Posterior cingulate gyrus (tissue), 11 donors: ENCODE measurements at regions of chr3 and their contacts with region 1.

Region 1: GRCh38 chr3:14203521-14204079 is 25.0 kb downstream of the LSM3 start:
- DNase-seq: peak in 7 of 10 donors; percentile 33 to 94 (median 74)

Region 2: DNA sequence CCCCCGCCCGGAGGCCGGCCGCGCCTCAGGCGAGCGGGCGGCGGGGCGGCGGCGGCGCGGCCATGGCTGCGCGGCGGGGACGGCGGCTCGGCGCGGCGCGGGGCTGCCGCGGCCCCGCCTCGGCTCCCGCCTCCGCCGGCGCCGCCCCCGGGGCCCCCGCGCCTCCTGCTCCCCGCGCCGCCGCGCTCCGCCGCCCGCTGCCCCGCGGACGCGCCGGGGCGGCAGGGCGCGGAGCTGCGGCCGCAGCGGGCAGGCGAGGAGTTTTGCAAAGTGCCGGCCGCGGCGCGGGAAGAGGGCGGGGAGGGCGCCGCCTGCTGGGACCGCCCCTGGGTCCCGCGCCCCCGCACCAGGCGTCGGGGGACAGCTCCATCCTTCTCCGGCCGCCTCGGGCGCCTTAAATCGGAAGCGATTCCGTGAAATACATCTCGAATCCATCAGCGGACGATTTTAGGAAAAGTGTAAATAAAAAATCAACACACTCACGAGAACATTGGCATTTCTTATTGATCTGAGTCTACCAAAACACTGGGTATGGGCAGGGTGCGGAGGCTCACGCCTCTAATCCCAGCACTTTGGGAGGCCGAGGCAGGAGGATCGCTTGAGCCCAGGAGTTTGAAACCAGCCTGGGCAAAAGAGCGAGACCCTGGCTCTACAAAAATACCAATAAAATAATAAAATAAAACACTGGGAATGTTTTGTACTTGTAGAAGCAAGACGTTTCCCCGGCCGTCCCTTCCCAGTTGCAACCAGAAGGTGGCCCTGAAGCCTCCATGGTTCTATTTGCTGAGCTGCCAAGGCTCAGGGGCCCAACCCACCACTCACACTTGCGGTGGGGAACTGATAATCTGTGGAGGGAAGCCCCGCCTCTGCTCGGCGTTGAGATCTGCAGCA is 920.4 kb before region 1 on chr3:
- intact Hi-C with region 1: no loop called
- DNase-seq: peak in 6 of 10 donors; percentile 9 to 90 (median 71)

Region 3: DNA sequence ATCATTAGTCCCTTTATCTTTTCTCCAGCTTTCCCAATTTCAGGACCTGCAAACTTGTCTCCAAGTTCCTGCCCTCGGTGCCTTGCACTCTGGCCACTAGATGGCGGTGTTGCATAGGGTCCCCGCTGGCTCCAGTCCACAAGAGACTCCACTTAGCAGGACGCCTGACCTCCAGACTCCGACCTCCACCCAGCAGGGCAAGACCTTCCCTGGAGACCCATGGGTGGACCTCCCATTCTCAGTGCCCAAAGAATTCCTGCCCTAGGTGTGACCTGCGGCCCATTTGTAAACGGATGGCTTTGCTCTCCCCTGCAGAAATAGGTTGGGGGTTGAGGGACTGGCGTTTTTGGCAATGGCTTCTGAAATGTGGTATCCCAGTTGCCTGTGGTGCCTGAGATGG is 57.6 kb after region 1 on chr3:
- intact Hi-C with region 1: loop called (anchors 1 kb)
- DNase-seq: peak; percentile 69 to 98 (median 90)

Region 4: DNA sequence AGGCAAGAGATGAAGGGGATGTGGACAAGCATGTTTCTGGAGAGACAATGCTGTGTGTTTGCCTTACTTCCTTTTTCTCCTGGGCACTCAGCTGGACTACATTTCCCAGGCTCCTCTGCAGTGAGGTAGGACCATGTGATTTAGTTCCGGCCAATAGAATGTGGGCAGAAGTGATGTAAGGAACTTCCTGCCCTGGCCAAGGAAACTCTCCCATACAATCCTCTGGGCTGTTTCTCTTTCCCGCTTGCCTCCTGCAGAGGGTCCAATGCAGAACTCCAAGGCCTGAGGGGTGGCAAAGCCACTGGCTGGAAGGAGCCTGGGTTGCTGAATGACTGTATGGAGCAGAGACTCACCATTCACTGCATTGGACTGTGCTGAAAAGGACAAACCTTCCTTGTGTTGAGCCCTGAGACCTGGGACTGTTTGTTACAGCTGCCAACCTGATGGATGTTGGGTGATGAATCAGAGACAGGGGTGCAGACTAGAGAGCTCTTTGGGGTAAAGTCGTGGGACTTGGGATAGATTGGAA is 116.1 kb after region 1 on chr3:
- intact Hi-C with region 1: no loop called
- DNase-seq: peak in 1 of 10 donors; percentile 18

Region 5: GRCh38 chr3:14461748-14462324 is 258.2 kb after region 1 on chr3:
- intact Hi-C with region 1: loop called (anchors 2 kb)
- DNase-seq: peak in 9 of 10 donors; percentile 37 to 94 (median 66)

Region 6: DNA sequence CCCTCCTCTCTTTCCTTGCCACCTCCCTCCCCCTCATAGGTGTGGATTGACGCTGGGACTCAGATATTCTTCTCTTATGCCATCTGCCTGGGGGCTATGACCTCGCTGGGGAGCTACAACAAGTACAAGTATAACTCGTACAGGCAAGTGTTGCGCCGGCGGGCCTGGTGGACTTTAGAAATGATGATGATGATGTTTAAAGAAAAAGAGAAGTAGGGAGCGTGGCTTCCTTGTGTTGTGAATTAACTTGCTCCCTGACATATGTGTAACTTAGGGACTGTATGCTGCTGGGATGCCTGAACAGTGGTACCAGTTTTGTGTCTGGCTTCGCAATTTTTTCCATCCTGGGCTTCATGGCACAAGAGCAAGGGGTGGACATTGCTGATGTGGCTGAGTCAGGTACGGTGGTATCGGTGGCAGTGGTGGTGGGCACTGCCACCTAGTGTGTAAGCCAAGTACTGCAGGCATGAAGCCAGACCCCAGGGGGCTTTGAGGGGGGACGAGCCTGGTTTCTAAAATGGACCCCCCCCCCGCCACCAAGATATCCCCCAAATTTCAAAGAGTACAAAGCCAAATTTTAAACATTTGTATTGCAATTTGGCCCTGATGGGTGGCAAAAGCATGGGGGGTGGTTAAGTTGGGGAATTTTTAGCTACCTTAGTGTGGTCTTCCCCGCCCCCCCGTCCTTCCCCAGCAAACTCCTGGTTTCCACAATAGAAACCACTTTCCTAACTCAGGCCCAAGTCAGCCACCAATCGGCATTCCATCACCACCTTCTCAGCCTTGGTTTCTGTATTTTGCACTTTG is 264.4 kb after region 1 on chr3:
- intact Hi-C with region 1: loop called (anchors 1 kb)
- DNase-seq: peak in 7 of 10 donors; percentile 30 to 93 (median 47)